Gastrocnemius medialis (tissue), 4 donors: ENCODE measurements at regions of chr2 and their contacts with region 1.

Region 1: DNA sequence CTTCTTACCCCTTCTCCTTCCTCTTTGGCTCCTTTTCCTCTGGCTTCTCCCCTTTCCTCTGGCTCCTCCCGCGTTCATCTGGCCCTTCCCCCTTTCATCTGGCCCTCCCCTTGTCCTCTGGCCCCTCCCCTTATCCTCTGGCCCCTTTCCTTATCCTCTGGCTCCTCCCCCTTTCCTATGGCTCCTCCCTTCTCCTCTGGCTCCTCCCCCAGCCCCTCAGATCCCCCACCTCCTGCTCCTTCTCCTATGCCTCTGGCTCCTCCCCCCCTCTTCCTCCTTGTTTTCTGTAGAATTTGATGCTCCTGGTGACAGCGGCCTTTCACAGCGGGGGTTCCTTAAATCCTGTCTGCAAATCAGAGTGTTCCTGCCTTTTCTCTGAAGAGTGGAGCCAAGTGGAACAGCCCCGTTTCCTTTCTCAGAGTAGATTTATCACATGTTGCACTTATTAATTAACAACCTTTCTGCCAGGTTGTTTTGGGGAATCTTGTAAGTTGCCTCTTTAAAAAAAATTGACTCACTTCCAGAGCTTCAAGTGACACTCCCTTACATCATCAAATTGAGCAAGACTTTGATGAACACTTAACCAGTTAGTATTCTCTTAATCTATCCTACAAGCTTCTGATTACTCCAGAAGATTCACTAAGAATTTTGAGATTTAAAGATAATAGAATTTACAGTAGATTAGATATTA is 27.9 kb downstream of the FABP1 start:
- DNase-seq: peak; percentile 51 to 83
- ATAC-seq: peak; percentile 80
- H3K4me3 ChIP-seq: peak overlapping the region in 1 of 4 donors; percentile 11
- H3K27ac ChIP-seq: peak overlapping the region; percentile 82 to 94 (median 89)
- H3K4me1 ChIP-seq: peaks cover 14 to 18% of the 10 kb centered on the region in 2 donors
- H3K27me3 ChIP-seq: no peaks in the 10 kb centered on the region
- CTCF ChIP-seq: no peak
- POLR2A ChIP-seq: no peak

Region 2: DNA sequence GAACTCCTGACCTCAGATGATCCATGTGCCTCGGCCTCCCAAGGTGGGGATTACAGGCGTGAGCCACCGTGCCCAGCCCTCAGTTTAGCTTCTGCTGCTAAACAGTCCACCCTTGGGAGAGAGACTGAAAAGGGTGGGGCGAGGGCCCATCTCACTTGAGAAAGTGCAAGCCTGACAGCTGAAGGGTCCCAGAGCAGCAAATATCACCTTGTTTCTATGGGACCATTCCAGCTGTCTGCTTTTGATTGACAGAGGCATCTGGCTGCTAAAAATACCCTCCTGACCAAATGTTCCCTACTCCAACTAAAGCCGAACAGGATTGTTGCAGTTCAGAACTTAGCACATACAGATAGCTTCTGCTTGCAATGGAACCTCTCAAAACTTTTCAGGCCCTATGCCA is 32.8 kb before region 1 on chr2:
- in situ Hi-C with region 1: no loop called
- intact Hi-C with region 1: loop called (anchors 2 kb)
- DNase-seq: peak; percentile 67 to 84
- ATAC-seq: peak; percentile 88 to 92
- H3K4me3 ChIP-seq: peak overlapping the region; percentile 41 to 71 (median 58)
- H3K27ac ChIP-seq: peak overlapping the region; percentile 94 to 98 (median 98)
- H3K4me1 ChIP-seq: peaks cover 13 to 30% of the 10 kb centered on the region in 2 donors
- H3K27me3 ChIP-seq: no peaks in the 10 kb centered on the region
- CTCF ChIP-seq: no peak
- POLR2A ChIP-seq: no peak

Region 3: DNA sequence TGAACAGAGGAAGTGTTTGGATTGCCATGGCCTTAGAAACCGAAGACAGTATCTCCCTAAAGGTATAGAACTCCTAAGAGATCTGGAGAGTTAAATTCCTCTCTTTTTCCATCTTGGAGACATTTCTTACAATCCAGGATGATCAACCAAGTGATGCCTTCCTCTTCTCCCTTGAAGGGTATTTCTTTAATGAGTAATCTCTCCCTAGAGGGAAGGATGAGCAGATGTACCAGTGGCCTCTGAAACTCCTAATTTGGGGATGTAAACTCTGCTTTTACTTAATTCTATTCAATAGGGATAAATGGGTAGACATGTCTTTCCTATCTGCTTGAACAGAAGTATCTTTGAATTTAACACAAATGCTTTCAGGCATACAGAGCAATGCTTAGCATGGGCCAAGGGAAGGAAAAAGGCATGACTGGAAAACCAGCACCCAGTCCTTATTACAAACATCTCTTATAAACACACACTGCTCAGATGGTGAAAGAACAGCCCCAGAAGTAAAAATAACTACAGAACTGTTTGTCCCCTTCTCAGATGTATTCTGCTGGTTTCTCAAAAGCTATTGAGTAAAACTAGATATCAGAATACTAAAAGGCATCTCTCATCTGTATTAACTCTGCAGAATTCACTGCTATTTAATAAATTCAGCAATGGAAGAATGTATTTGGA is 65.5 kb after region 1 on chr2:
- in situ Hi-C with region 1: no loop called
- intact Hi-C with region 1: loop called (anchors 2 kb)
- DNase-seq: peak in 1 of 2 donors; percentile 52
- ATAC-seq: peak; percentile 89 to 97
- H3K4me3 ChIP-seq: no peak overlapping the region
- H3K27ac ChIP-seq: peak overlapping the region; percentile 88 to 98 (median 96)
- H3K4me1 ChIP-seq: peaks cover 31 to 36% of the 10 kb centered on the region in 2 donors
- H3K27me3 ChIP-seq: no peaks in the 10 kb centered on the region
- CTCF ChIP-seq: no peak
- POLR2A ChIP-seq: peak; percentile 53 to 69

Region 4: GRCh38 chr2:88187038-88187676 is 87.2 kb after region 1 on chr2:
- in situ Hi-C with region 1: no loop called
- intact Hi-C with region 1: loop called (anchors 2 kb)
- DNase-seq: peak; percentile 51 to 75
- ATAC-seq: peak; percentile 81 to 93
- H3K4me3 ChIP-seq: no peak overlapping the region
- H3K27ac ChIP-seq: no peak overlapping the region
- H3K4me1 ChIP-seq: no peaks in the 10 kb centered on the region
- H3K27me3 ChIP-seq: no peaks in the 10 kb centered on the region
- CTCF ChIP-seq: peak; percentile 60 to 83 (median 75)
- POLR2A ChIP-seq: no peak

Region 5: DNA sequence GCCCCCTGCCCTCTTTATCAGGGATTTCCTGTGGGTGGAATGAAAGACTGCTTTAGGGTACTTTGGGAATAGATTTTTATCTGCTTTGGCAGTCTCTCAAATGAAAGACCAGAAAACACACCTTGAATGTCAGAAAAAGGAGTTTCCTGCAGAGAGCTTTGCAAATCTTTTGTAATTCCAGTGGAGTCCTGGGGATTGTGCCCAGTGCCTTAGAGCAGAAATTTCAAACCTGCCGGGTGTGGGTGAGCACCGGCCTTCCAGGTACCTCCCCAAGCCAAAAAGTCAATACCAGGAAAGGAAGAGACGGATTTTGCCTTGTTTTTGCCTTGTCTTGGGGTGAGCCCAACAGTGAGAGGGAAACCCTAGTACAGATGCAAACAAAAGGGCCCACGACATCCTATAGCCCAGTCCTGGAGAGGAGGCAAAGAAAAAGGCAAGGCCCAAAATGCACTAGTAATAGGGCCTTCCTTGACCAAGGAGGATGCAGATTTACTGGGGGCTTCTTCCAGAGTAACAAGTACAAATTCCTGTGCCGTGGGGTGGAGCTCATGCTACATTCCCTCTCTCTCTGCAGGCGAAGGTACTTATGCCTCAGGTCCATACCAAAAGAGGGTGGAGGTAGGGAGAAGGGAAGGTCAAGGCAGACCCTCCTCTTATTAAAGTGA is 316.2 kb after region 1 on chr2:
- in situ Hi-C with region 1: no loop called
- intact Hi-C with region 1: no loop called
- DNase-seq: no peak
- ATAC-seq: no peak
- H3K4me3 ChIP-seq: no peak overlapping the region
- H3K27ac ChIP-seq: no peak overlapping the region
- H3K4me1 ChIP-seq: no peaks in the 10 kb centered on the region
- H3K27me3 ChIP-seq: no peaks in the 10 kb centered on the region
- CTCF ChIP-seq: no peak
- POLR2A ChIP-seq: no peak